ENCODE measurements at regions of chr17 and their contacts with region 1.

Region 1: GRCh38 chr17:63445979-63446691 is at the start of gene CYB561:
- DNase-seq: peak; percentile 41 to 87 (median 65)
- ATAC-seq: peak; percentile 65
- H3K4me3 ChIP-seq: peak within 1 kb of the TSS; percentile 59 to 61
- H3K4me3 Mint-ChIP-seq: peak within 1 kb of the TSS; percentile 77
- H3K27ac ChIP-seq: peak within 1 kb of the TSS; percentile 49 to 90
- H3K27ac Mint-ChIP-seq: peak within 1 kb of the TSS; percentile 83
- H3K4me1 ChIP-seq: peaks cover 12% of the 10 kb centered on the region
- H3K4me1 Mint-ChIP-seq: peaks cover 33% of the 10 kb centered on the region
- H3K27me3 ChIP-seq: no peaks in the 10 kb centered on the region
- H3K27me3 Mint-ChIP-seq: no peaks in the 10 kb centered on the region
- CTCF ChIP-seq: peak; percentile 27
- total RNA-seq, gene CYB561: 13.7 to 14.9 TPM

Region 2: GRCh38 chr17:63434876-63435684 is 11.1 kb before region 1 on chr17:
- CTCF ChIA-PET with region 1: interaction called, 105 read pairs
- POLR2A ChIA-PET with region 1: interaction called, 10 read pairs
- intact Hi-C with region 1: no loop called
- DNase-seq: peak; percentile 11 to 84 (median 59)
- ATAC-seq: peak; percentile 96
- H3K4me3 ChIP-seq: no peak overlapping the region
- H3K4me3 Mint-ChIP-seq: peak overlapping the region; percentile 58
- H3K27ac ChIP-seq: peak overlapping the region in 1 of 2 experiments; percentile 60
- H3K27ac Mint-ChIP-seq: peak overlapping the region; percentile 84
- H3K4me1 ChIP-seq: peaks cover 37% of the 10 kb centered on the region
- H3K4me1 Mint-ChIP-seq: peaks cover 34% of the 10 kb centered on the region
- H3K27me3 ChIP-seq: no peaks in the 10 kb centered on the region
- H3K27me3 Mint-ChIP-seq: no peaks in the 10 kb centered on the region
- CTCF ChIP-seq: peak; percentile 31

Region 3: GRCh38 chr17:63542942-63543821 is 97.0 kb after region 1 on chr17:
- CTCF ChIA-PET with region 1: no interaction called
- POLR2A ChIA-PET with region 1: no interaction called
- intact Hi-C with region 1: no loop called
- DNase-seq: no peak
- ATAC-seq: no peak
- H3K4me3 ChIP-seq: no peak overlapping the region
- H3K4me3 Mint-ChIP-seq: no peak overlapping the region
- H3K27ac ChIP-seq: no peak overlapping the region
- H3K27ac Mint-ChIP-seq: no peak overlapping the region
- H3K4me1 ChIP-seq: no peaks in the 10 kb centered on the region
- H3K4me1 Mint-ChIP-seq: peaks cover 6% of the 10 kb centered on the region
- H3K27me3 ChIP-seq: peaks cover 0 to 5% of the 10 kb centered on the region in 2 experiments
- H3K27me3 Mint-ChIP-seq: peaks cover 16% of the 10 kb centered on the region
- CTCF ChIP-seq: no peak

Region 4: GRCh38 chr17:63587770-63588169 is 141.6 kb after region 1 on chr17:
- CTCF ChIA-PET with region 1: no interaction called
- POLR2A ChIA-PET with region 1: no interaction called
- intact Hi-C with region 1: no loop called
- DNase-seq: no peak
- ATAC-seq: no peak
- H3K4me3 ChIP-seq: no peak overlapping the region
- H3K4me3 Mint-ChIP-seq: no peak overlapping the region
- H3K27ac ChIP-seq: no peak overlapping the region
- H3K27ac Mint-ChIP-seq: no peak overlapping the region
- H3K4me1 ChIP-seq: peaks cover 10% of the 10 kb centered on the region
- H3K4me1 Mint-ChIP-seq: peaks cover 16% of the 10 kb centered on the region
- H3K27me3 ChIP-seq: no peaks in the 10 kb centered on the region
- H3K27me3 Mint-ChIP-seq: no peaks in the 10 kb centered on the region
- CTCF ChIP-seq: no peak

Measured in CD8-positive, alpha-beta T cell (primary cell).